ENCODE measurements at regions of chr17 and their contacts with region 1.

Region 1: GRCh38 chr17:65556014-65556909 is 5.2 kb downstream of the AXIN2 start:
- DNase-seq: peak; percentile 82 to 96 (median 88)
- ATAC-seq: peak; percentile 66
- H3K4me3 ChIP-seq: peak overlapping the region; percentile 48
- H3K4me3 Mint-ChIP-seq: peak overlapping the region in 1 of 10 donors; percentile 41
- H3K27ac ChIP-seq: no peak overlapping the region
- H3K27ac Mint-ChIP-seq: no peak overlapping the region
- H3K4me1 ChIP-seq: peaks cover 19 to 38% of the 10 kb centered on the region in 2 donors
- H3K4me1 Mint-ChIP-seq: peaks cover 0 to 29% (median 21%) of the 10 kb centered on the region in 7 donors
- H3K27me3 ChIP-seq: no peaks in the 10 kb centered on the region
- H3K27me3 Mint-ChIP-seq: peaks cover 0 to 15% (median 0%) of the 10 kb centered on the region in 5 donors

Region 2: GRCh38 chr17:65231662-65232335 is 324.5 kb before region 1 on chr17:
- CTCF ChIA-PET with region 1: no interaction called
- POLR2A ChIA-PET with region 1: no interaction called
- intact Hi-C with region 1: loop called in 1 of 2 experiments (anchors 1 kb)
- DNase-seq: peak in 6 of 9 donors; percentile 31 to 49 (median 39)
- ATAC-seq: peak; percentile 52
- H3K4me3 ChIP-seq: no peak overlapping the region
- H3K4me3 Mint-ChIP-seq: no peak overlapping the region
- H3K27ac ChIP-seq: no peak overlapping the region
- H3K27ac Mint-ChIP-seq: peak overlapping the region in 1 of 9 donors; percentile 51
- H3K4me1 ChIP-seq: peaks cover 14 to 24% of the 10 kb centered on the region in 2 donors
- H3K4me1 Mint-ChIP-seq: peaks cover 14 to 48% (median 18%) of the 10 kb centered on the region in 7 donors
- H3K27me3 ChIP-seq: no peaks in the 10 kb centered on the region
- H3K27me3 Mint-ChIP-seq: peaks cover 0 to 29% (median 5%) of the 10 kb centered on the region in 5 donors

Region 3: GRCh38 chr17:65418628-65419027 is 137.6 kb before region 1 on chr17:
- CTCF ChIA-PET with region 1: no interaction called
- POLR2A ChIA-PET with region 1: no interaction called
- intact Hi-C with region 1: loop called (anchors 2 kb)
- DNase-seq: no peak
- ATAC-seq: no peak
- H3K4me3 ChIP-seq: no peak overlapping the region
- H3K4me3 Mint-ChIP-seq: no peak overlapping the region
- H3K27ac ChIP-seq: no peak overlapping the region
- H3K27ac Mint-ChIP-seq: no peak overlapping the region
- H3K4me1 ChIP-seq: no peaks in the 10 kb centered on the region
- H3K4me1 Mint-ChIP-seq: no peaks in the 10 kb centered on the region
- H3K27me3 ChIP-seq: no peaks in the 10 kb centered on the region
- H3K27me3 Mint-ChIP-seq: peaks cover 0 to 4% (median 2%) of the 10 kb centered on the region in 5 donors

Region 4: DNA sequence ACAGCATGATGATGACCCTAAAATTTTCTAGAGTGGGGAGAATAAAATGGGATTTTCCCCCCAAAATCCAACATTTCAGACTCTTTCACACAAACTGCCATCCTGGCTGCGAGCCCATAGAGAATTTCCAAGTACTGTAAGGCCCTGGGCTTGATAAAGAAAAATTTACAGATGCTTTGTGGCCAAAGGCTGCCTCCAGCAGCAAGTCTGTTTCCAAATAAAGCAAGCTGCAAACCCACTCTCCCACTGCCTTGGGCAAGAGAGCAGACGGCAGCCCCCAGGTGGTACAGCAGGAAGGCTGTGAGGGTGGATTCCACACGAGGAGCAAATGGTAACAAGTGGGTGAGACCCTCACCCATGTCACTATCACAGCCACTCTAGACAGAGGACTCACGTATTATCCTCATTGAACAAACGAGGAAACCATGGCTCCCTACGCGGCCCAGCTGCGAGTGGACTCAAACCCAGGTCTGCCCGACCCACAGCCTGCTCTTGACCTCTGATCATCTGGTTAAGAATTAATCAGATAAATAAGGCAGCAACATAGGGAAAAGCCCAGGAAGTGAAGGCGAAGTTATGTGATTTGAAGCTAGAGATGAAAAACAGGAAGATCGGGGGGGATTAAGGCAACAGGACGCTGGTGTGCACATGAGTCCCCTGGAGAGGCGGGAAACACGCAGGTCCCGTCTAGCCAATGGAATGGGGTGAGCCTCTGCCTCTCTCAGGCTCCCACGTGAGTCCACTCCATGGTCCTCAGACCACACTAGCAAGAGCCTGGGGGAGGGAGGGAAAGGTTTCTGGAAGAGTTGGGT is 32.2 kb before region 1 on chr17:
- CTCF ChIA-PET with region 1: no interaction called
- POLR2A ChIA-PET with region 1: interaction called, 3 read pairs
- intact Hi-C with region 1: loop called (anchors 1 to 2 kb)
- DNase-seq: peak in 1 of 9 donors; percentile 28
- ATAC-seq: peak; percentile 7
- H3K4me3 ChIP-seq: no peak overlapping the region
- H3K4me3 Mint-ChIP-seq: peak overlapping the region; percentile 46 to 80 (median 63)
- H3K27ac ChIP-seq: peak overlapping the region; percentile 63
- H3K27ac Mint-ChIP-seq: peak overlapping the region; percentile 57 to 96 (median 91)
- H3K4me1 ChIP-seq: peaks cover 24 to 28% of the 10 kb centered on the region in 2 donors
- H3K4me1 Mint-ChIP-seq: peaks cover 15 to 56% (median 47%) of the 10 kb centered on the region in 7 donors
- H3K27me3 ChIP-seq: no peaks in the 10 kb centered on the region
- H3K27me3 Mint-ChIP-seq: peaks cover 0 to 64% (median 0%) of the 10 kb centered on the region in 5 donors

Region 5: DNA sequence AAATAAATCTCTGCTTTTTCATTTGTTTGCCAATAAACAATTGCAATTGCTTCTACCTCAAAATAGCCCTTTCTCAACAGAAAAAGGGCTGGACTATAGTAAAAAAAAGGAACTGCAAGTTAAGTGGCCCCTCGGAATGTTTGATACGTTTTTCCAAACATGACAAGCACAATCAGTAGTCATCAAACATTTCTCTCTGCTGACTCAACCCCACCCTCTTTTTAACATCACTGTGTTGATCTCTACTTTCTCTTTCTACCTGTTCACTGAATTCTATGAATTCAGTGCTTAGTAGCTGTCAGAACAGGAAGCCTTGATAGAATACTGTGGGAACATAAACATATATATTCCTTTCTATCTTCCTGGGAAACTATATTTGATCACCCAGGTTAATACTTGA is 121.7 kb after region 1 on chr17:
- CTCF ChIA-PET with region 1: no interaction called
- POLR2A ChIA-PET with region 1: no interaction called
- intact Hi-C with region 1: loop called in 1 of 2 experiments (anchors 10 kb)
- DNase-seq: peak in 1 of 9 donors; percentile 14
- ATAC-seq: no peak
- H3K4me3 ChIP-seq: no peak overlapping the region
- H3K4me3 Mint-ChIP-seq: peak overlapping the region in 1 of 10 donors; percentile 12
- H3K27ac ChIP-seq: no peak overlapping the region
- H3K27ac Mint-ChIP-seq: peak overlapping the region in 2 of 9 donors; percentile 6 to 10
- H3K4me1 ChIP-seq: peaks cover 0 to 8% of the 10 kb centered on the region in 2 donors
- H3K4me1 Mint-ChIP-seq: peaks cover 0 to 13% (median 12%) of the 10 kb centered on the region in 7 donors
- H3K27me3 ChIP-seq: no peaks in the 10 kb centered on the region
- H3K27me3 Mint-ChIP-seq: no peaks in the 10 kb centered on the region

Measured in naive thymus-derived CD4-positive, alpha-beta T cell (primary cell).